A549 (cell line): ENCODE measurements at regions of chr10 and their contacts with region 1.

Region 1: GRCh38 chr10:112140110-112140970 is 43.2 kb downstream of the GPAM start:
- DNase-seq: peak; percentile 81 to 91
- ATAC-seq: peak; percentile 92 to 99
- H3K4me3 ChIP-seq: no peak overlapping the region
- H3K27ac ChIP-seq: no peak overlapping the region
- H3K4me1 ChIP-seq: no peaks in the 10 kb centered on the region
- CTCF ChIP-seq: peak; percentile 80
- EP300 ChIP-seq: no peak
- POLR2A ChIP-seq: no peak
- RAD21 ChIP-seq: peak; percentile 73 to 75

Region 2: DNA sequence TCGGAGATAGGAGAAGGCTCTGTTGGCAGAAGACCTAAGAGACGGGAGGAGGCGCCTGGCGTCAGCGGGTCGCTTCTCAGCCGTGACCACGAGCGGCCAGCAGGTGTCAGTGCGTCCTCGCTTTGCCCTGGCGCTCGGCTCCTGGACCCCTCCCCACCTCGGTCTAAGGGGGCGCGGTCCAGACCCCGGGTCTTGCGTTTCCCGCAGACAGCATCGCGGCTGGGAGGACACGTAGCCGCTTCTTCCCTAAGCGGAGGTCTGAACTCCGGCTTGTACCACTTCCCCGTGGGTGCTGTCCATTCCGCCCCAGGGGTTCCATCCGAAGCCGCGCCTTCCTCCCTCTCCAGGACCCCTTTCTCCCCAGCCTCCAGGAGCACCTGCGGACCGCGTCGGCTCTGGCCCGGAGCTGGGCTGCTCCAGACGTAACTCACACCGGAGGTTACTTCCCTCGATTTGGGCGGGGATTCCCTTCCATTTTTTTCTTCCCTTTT is 1064.1 kb before region 1 on chr10:
- CTCF ChIA-PET with region 1: interaction called, 20 read pairs
- POLR2A ChIA-PET with region 1: no interaction called
- DNase-seq: peak; percentile 58 to 71
- ATAC-seq: peak; percentile 86 to 94
- H3K4me3 ChIP-seq: peak overlapping the region; percentile 61
- H3K27ac ChIP-seq: peak overlapping the region in 1 of 2 experiments; percentile 20; a peak in 2 of 6 replicates
- H3K4me1 ChIP-seq: 0 out of 3 replicates have a peak, but pooled peaks cover 4% of the 10 kb centered on the region
- CTCF ChIP-seq: peak; percentile 78
- EP300 ChIP-seq: no peak
- POLR2A ChIP-seq: no peak
- RAD21 ChIP-seq: peak; percentile 73 to 89

Region 3: DNA sequence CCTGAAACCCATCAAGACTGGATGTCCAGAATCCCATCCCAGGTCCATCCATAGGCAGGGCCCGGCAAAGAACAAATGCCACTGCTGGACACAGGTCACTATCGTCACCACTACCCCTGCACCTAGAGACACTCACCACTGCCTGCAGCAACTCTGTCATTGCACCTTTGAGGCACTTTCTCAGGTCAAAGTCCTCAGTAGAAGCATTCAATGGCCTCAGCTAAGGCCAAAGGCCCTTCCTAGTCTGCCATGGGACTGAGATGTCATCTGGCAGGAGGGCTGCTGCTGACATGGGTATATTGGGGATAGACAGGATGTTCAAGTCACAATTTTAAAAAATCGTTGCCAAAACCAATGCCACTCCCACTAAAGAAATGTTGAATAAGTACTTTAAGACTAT is 15.5 kb before region 1 on chr10:
- CTCF ChIA-PET with region 1: interaction called, 60 read pairs
- POLR2A ChIA-PET with region 1: no interaction called
- DNase-seq: no peak
- ATAC-seq: no peak
- H3K4me3 ChIP-seq: no peak overlapping the region
- H3K27ac ChIP-seq: no peak overlapping the region
- H3K4me1 ChIP-seq: no peaks in the 10 kb centered on the region
- CTCF ChIP-seq: no peak
- EP300 ChIP-seq: no peak
- POLR2A ChIP-seq: no peak
- RAD21 ChIP-seq: no peak

Region 4: GRCh38 chr10:112160834-112161233 is 20.5 kb after region 1 on chr10:
- CTCF ChIA-PET with region 1: interaction called, 12 read pairs
- POLR2A ChIA-PET with region 1: no interaction called
- DNase-seq: no peak
- ATAC-seq: no peak
- H3K4me3 ChIP-seq: no peak overlapping the region
- H3K27ac ChIP-seq: no peak overlapping the region
- H3K4me1 ChIP-seq: no peaks in the 10 kb centered on the region
- CTCF ChIP-seq: no peak
- EP300 ChIP-seq: no peak
- POLR2A ChIP-seq: no peak
- RAD21 ChIP-seq: no peak

Region 5: GRCh38 chr10:112307358-112308124 is 167.2 kb after region 1 on chr10:
- CTCF ChIA-PET with region 1: interaction called, 29 read pairs
- POLR2A ChIA-PET with region 1: no interaction called
- DNase-seq: peak; percentile 36 to 53
- ATAC-seq: peak; percentile 80 to 93
- H3K4me3 ChIP-seq: no peak overlapping the region
- H3K27ac ChIP-seq: no peak overlapping the region
- H3K4me1 ChIP-seq: peaks cover 5% of the 10 kb centered on the region; the same call in 1 of the 3 replicates
- CTCF ChIP-seq: peak; percentile 56
- EP300 ChIP-seq: no peak
- POLR2A ChIP-seq: no peak
- RAD21 ChIP-seq: peak; percentile 51 to 62